GM12878 (cell line): ENCODE measurements at regions of chr16 and their contacts with region 1.

Region 1: GRCh38 chr16:58515125-58515870 is at the start of gene SETD6:
- DNase-seq: no peak
- ATAC-seq: peak; percentile 89
- H3K4me3 ChIP-seq: peak within 1 kb of the TSS; percentile 93
- H3K27ac ChIP-seq: peak within 1 kb of the TSS; percentile 54
- H3K4me1 ChIP-seq: peaks cover 37% of the 10 kb centered on the region
- H3K27me3 ChIP-seq: no peaks in the 10 kb centered on the region
- CTCF ChIP-seq: peak in 1 of 3 experiments; percentile 18; a peak in 1 of 6 replicates
- EP300 ChIP-seq: no peak
- POLR2A ChIP-seq: peak; percentile 84
- RAD21 ChIP-seq: no peak
- polyA plus RNA-seq, gene SETD6: 8.2 to 13.4 TPM

Region 2: GRCh38 chr16:58464047-58464915 is 51.0 kb before region 1 on chr16:
- CTCF ChIA-PET with region 1: no interaction called
- POLR2A ChIA-PET with region 1: no interaction called
- RAD21 ChIA-PET with region 1: no interaction called
- SMC1A ChIA-PET with region 1: no interaction called
- in situ Hi-C with region 1: no loop called
- intact Hi-C with region 1: no loop called
- DNase-seq: no peak
- ATAC-seq: peak; percentile 46
- H3K4me3 ChIP-seq: no peak overlapping the region
- H3K27ac ChIP-seq: no peak overlapping the region
- H3K4me1 ChIP-seq: no peaks in the 10 kb centered on the region
- H3K27me3 ChIP-seq: peaks cover 8 to 10% of the 10 kb centered on the region in 2 experiments; a peak in 3 of 4 replicates
- CTCF ChIP-seq: no peak
- EP300 ChIP-seq: no peak
- POLR2A ChIP-seq: no peak
- RAD21 ChIP-seq: no peak

Region 3: DNA sequence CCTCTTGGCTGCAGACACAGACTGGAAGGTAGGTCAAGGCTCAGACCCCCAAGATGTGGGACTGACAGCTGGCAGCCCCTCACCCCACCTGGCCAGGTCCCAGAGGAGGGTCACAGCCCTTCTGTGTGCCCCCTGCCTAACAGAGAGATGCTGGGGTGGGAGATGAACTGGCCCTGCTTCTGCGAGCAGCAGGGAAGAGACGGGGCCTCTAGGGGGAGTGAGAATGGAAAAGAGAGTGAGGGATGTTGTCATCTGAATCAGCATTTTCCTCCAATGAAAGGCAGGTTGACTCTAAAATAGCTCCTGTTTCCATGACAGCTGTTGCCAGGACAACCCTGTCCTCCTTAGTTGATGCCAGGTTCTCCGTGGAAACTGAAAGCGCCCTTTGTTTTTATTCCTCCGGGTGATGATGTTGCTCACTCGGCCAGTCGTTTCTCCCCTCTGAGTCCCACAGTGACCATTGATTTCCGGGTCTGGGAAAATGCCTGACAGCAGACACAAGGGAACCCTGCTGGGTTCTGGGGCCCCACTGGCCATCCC is 20.2 kb before region 1 on chr16:
- CTCF ChIA-PET with region 1: interaction called, 13 read pairs
- POLR2A ChIA-PET with region 1: no interaction called
- RAD21 ChIA-PET with region 1: interaction called, 4 read pairs
- SMC1A ChIA-PET with region 1: interaction called, 3 read pairs
- in situ Hi-C with region 1: no loop called
- intact Hi-C with region 1: no loop called
- DNase-seq: peak; percentile 59
- ATAC-seq: peak; percentile 73
- H3K4me3 ChIP-seq: no peak overlapping the region
- H3K27ac ChIP-seq: no peak overlapping the region
- H3K4me1 ChIP-seq: peaks cover 21% of the 10 kb centered on the region
- H3K27me3 ChIP-seq: no peaks in the 10 kb centered on the region; a peak in 2 of 4 replicates
- CTCF ChIP-seq: peak; percentile 48 to 57 (median 52)
- EP300 ChIP-seq: no peak
- POLR2A ChIP-seq: no peak
- RAD21 ChIP-seq: 0 out of 2 replicates have a peak, but pooled peaks have one; percentile 9

Region 4: GRCh38 chr16:58614212-58614611 is 98.9 kb after region 1 on chr16:
- CTCF ChIA-PET with region 1: no interaction called
- POLR2A ChIA-PET with region 1: no interaction called
- RAD21 ChIA-PET with region 1: no interaction called
- SMC1A ChIA-PET with region 1: no interaction called
- in situ Hi-C with region 1: no loop called
- intact Hi-C with region 1: no loop called
- DNase-seq: no peak
- ATAC-seq: no peak; the same call in 2 of the 3 replicates
- H3K4me3 ChIP-seq: no peak overlapping the region
- H3K27ac ChIP-seq: no peak overlapping the region
- H3K4me1 ChIP-seq: no peaks in the 10 kb centered on the region; the same call in 1 of the 2 replicates
- H3K27me3 ChIP-seq: no peaks in the 10 kb centered on the region
- CTCF ChIP-seq: no peak
- EP300 ChIP-seq: no peak
- POLR2A ChIP-seq: no peak
- RAD21 ChIP-seq: no peak

Region 5: DNA sequence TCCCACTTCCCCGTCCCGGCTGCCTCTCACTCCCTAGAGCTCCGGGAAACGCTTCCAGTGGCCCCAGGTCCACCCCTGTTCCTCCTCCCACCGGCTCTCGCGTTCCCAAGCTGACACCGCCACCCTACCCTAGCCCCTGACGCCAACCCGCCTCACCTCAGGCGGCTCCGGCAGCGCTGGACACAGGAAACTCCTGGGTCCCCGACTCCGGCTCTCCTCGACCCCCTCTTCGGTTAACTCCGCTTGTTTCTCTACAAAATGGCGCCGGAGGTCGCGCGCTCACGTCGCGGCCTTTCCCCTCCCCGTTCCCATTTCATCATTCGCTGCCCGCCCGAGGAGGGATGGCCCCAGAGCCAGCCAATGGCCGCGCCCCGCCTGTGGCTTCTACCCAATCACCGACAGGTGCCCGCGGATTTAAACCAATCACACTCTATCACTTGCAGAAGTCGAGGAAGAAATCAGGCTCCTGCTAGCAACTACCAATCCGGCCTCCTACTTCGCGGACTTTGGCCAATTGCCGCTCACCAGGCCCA is 114.3 kb after region 1 on chr16 and contains the start of gene CNOT1:
- CTCF ChIA-PET with region 1: interaction called, 4 read pairs
- POLR2A ChIA-PET with region 1: interaction called, 6 read pairs
- RAD21 ChIA-PET with region 1: no interaction called
- SMC1A ChIA-PET with region 1: interaction called, 8 read pairs
- in situ Hi-C with region 1: no loop called
- intact Hi-C with region 1: loop called (anchors 1 kb)
- DNase-seq: peak; percentile 97
- ATAC-seq: peak; percentile 89
- H3K4me3 ChIP-seq: peak within 1 kb of the TSS; percentile 85
- H3K27ac ChIP-seq: peak within 1 kb of the TSS; percentile 96
- H3K4me1 ChIP-seq: no peaks in the 10 kb centered on the region; the same call in 1 of the 2 replicates
- H3K27me3 ChIP-seq: no peaks in the 10 kb centered on the region
- CTCF ChIP-seq: no peak
- EP300 ChIP-seq: no peak
- POLR2A ChIP-seq: peak; percentile 88
- RAD21 ChIP-seq: no peak
- polyA plus RNA-seq, gene CNOT1: 101 to 131 TPM

Region 6: GRCh38 chr16:58661199-58661830 is 146.0 kb after region 1 on chr16:
- CTCF ChIA-PET with region 1: interaction called, 30 read pairs
- POLR2A ChIA-PET with region 1: no interaction called
- RAD21 ChIA-PET with region 1: interaction called, 15 read pairs
- SMC1A ChIA-PET with region 1: interaction called, 11 read pairs
- in situ Hi-C with region 1: no loop called
- intact Hi-C with region 1: loop called (anchors 1 kb)
- DNase-seq: no peak
- ATAC-seq: peak; percentile 96
- H3K4me3 ChIP-seq: no peak overlapping the region
- H3K27ac ChIP-seq: no peak overlapping the region
- H3K4me1 ChIP-seq: no peaks in the 10 kb centered on the region
- H3K27me3 ChIP-seq: no peaks in the 10 kb centered on the region
- CTCF ChIP-seq: peak; percentile 57 to 90 (median 70); a peak in 5 of 6 replicates
- EP300 ChIP-seq: no peak
- POLR2A ChIP-seq: no peak
- RAD21 ChIP-seq: peak; percentile 86

Region 7: GRCh38 chr16:58733671-58734458 is 218.6 kb after region 1 on chr16 and contains the start of gene GOT2:
- CTCF ChIA-PET with region 1: interaction called, 5 read pairs
- POLR2A ChIA-PET with region 1: no interaction called
- RAD21 ChIA-PET with region 1: interaction called, 4 read pairs
- SMC1A ChIA-PET with region 1: no interaction called
- in situ Hi-C with region 1: loop called (anchors 25 kb)
- intact Hi-C with region 1: no loop called
- DNase-seq: peak; percentile 43
- ATAC-seq: peak; percentile 95
- H3K4me3 ChIP-seq: peak within 1 kb of the TSS; percentile 89
- H3K27ac ChIP-seq: peak within 1 kb of the TSS; percentile 64
- H3K4me1 ChIP-seq: peaks cover 7% of the 10 kb centered on the region
- H3K27me3 ChIP-seq: no peaks in the 10 kb centered on the region; a peak in 1 of 4 replicates
- CTCF ChIP-seq: peak; percentile 96 to 98 (median 98); a peak in 5 of 6 replicates
- EP300 ChIP-seq: no peak
- POLR2A ChIP-seq: peak; percentile 88
- RAD21 ChIP-seq: peak; percentile 24; the same call in 1 of the 2 replicates
- polyA plus RNA-seq, gene GOT2: 79.4 to 81.0 TPM

Region 8: DNA sequence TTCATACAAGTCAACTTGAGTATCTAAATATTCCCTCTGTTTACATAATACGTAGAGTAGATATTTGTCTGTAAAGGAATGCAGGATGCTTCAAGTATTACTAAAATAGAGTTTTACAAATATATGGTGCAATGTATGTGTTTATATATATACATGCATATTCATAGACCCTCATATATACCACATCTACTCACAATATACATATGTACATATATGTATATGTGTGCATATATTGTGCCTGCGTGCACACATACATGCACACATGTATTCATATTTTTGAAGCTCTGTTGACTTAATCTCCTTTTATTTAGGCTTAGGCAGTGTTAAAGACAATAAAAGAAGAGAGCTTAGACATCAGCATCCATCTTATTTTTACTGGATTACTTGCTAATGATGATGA is 835.4 kb after region 1 on chr16:
- CTCF ChIA-PET with region 1: no interaction called
- POLR2A ChIA-PET with region 1: no interaction called
- RAD21 ChIA-PET with region 1: no interaction called
- SMC1A ChIA-PET with region 1: no interaction called
- in situ Hi-C with region 1: no loop called
- intact Hi-C with region 1: no loop called
- DNase-seq: no peak
- ATAC-seq: no peak
- H3K4me3 ChIP-seq: no peak overlapping the region
- H3K27ac ChIP-seq: no peak overlapping the region
- H3K4me1 ChIP-seq: no peaks in the 10 kb centered on the region
- H3K27me3 ChIP-seq: no peaks in the 10 kb centered on the region
- CTCF ChIP-seq: no peak
- EP300 ChIP-seq: no peak
- POLR2A ChIP-seq: no peak
- RAD21 ChIP-seq: no peak